CD8-positive, alpha-beta memory T cell (primary cell): ENCODE measurements at regions of chr2 and their contacts with region 1.

Region 1: DNA sequence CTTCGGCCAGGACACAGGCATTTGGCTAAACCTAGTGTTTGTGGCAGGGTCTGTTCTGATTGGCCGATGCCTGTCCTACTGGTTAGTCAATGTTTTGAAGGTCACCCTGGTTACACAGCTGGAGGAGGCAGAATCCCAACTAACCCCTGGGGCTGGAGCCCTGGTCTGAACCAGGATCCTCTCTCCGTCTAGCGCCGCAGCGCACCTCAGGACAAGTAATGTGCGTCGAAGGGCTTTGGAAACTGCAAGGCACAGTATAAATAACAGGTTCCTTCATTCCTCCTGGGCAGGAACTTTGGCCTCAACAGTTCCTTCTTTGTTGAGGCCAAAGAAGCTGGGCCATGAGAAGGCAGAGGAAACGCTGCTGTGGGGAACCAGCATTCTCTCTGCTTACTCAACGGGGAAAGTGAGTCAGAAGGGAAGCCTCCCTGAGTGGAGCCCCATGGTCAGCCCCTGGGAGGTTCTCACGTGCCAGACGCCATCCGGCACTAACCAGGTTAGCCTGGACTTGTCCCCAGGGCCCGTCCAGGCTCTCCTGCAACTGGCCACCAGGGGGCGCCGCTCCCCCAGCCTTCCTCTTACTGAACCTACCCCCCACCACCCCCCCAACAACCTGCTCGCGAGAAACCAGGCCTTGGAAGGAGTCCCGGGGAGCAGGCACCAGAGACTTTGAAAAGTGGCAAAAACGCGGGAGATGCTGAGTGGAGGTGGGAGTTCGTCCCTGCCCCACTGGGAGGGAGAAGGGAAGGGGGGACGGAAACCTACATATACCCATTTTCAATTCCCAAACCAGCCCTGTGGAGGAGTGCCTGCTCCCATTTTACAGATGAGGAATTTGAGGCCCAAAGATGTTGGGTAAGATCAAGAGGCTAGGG is 19.8 kb downstream of the TEX44 start:
- DNase-seq: peak; percentile 79 to 92 (median 81)
- H3K4me3 ChIP-seq: peak overlapping the region; percentile 62
- H3K4me3 Mint-ChIP-seq: peak overlapping the region; percentile 54 to 90 (median 81)
- H3K27ac ChIP-seq: no peak overlapping the region
- H3K27ac Mint-ChIP-seq: peak overlapping the region; percentile 63 to 100 (median 90)
- H3K4me1 ChIP-seq: peaks cover 19% of the 10 kb centered on the region
- H3K4me1 Mint-ChIP-seq: peaks cover 16 to 40% (median 19%) of the 10 kb centered on the region in 3 donors
- H3K27me3 ChIP-seq: no peaks in the 10 kb centered on the region
- H3K27me3 Mint-ChIP-seq: peaks cover 0 to 2% of the 10 kb centered on the region in 2 donors

Region 2: DNA sequence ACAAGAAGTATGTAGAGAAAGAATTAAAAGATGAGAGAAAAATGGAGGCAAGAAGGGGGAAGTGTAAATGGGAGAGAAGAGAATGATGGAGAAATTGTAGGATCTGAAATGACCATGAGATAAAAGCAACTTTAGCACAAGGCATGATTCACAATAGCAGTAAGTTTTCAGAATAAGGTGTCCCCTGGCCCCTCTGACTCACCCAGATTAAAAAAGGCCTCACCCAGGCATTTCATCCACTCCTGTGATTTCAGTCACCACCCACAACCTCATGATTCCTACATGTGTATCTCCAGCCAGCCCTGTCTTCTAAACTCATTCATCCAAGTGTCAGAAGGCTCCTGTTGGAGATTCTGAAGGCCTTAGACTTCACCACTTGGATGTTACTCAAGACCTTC is 1139.8 kb before region 1 on chr2:
- CTCF ChIA-PET with region 1: no interaction called
- POLR2A ChIA-PET with region 1: no interaction called
- DNase-seq: no peak
- H3K4me3 ChIP-seq: no peak overlapping the region
- H3K4me3 Mint-ChIP-seq: no peak overlapping the region
- H3K27ac ChIP-seq: no peak overlapping the region
- H3K27ac Mint-ChIP-seq: peak overlapping the region; percentile 52 to 92 (median 78)
- H3K4me1 ChIP-seq: peaks cover 23% of the 10 kb centered on the region
- H3K4me1 Mint-ChIP-seq: peaks cover 29 to 56% (median 41%) of the 10 kb centered on the region in 3 donors
- H3K27me3 ChIP-seq: no peaks in the 10 kb centered on the region
- H3K27me3 Mint-ChIP-seq: no peaks in the 10 kb centered on the region

Region 3: DNA sequence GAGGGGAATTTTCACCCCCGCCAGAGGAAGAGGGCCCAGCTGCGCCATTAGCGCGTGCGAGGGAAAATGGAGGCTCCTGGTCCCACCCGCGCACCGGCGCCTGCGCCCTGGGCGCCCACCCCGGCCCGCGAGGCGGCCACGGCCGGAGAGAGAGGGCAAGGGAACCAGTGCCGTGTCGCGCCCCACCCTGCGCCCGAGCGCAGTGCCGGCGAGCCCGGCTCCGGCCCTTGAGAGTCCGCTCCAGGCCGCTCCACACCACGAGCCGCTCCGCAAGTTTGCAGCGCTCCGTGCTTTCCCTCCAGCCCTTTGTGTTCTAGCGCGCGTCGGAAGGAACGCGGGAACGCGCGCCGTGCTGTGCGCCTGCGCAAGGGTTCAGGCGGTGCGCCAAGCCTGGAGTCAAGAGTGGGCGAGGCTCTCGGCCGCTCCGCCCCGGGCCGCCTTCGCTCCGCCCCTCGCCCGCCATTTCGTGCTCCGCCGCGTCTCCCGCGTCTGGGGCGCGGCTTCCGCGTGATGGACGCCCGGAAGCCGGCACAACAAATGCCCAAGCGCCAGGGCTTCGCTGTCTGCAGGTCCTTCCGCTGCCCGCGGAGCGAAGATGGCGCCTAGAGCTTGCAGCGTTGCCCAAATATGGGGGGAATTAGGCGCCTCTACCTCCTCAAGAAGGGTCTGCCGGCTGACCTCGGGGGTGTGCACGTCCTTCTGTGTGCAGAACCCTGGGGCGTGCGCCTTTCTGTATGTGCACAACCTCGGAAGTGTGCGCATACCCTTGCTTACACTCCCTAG is 49.8 kb after region 1 on chr2:
- CTCF ChIA-PET with region 1: interaction called, 10 read pairs
- POLR2A ChIA-PET with region 1: interaction called, 5 read pairs
- DNase-seq: peak; percentile 94 to 99 (median 97)
- H3K4me3 ChIP-seq: peak overlapping the region; percentile 69
- H3K4me3 Mint-ChIP-seq: peak overlapping the region; percentile 74 to 88 (median 81)
- H3K27ac ChIP-seq: peak overlapping the region; percentile 83
- H3K27ac Mint-ChIP-seq: peak overlapping the region; percentile 92 to 97 (median 96)
- H3K4me1 ChIP-seq: peaks cover 11% of the 10 kb centered on the region
- H3K4me1 Mint-ChIP-seq: peaks cover 7 to 15% (median 12%) of the 10 kb centered on the region in 3 donors
- H3K27me3 ChIP-seq: no peaks in the 10 kb centered on the region
- H3K27me3 Mint-ChIP-seq: peaks cover 0 to 3% of the 10 kb centered on the region in 2 donors